MCF 10A (cell line): ENCODE measurements at regions of chr22 and their contacts with region 1.

Region 1: DNA sequence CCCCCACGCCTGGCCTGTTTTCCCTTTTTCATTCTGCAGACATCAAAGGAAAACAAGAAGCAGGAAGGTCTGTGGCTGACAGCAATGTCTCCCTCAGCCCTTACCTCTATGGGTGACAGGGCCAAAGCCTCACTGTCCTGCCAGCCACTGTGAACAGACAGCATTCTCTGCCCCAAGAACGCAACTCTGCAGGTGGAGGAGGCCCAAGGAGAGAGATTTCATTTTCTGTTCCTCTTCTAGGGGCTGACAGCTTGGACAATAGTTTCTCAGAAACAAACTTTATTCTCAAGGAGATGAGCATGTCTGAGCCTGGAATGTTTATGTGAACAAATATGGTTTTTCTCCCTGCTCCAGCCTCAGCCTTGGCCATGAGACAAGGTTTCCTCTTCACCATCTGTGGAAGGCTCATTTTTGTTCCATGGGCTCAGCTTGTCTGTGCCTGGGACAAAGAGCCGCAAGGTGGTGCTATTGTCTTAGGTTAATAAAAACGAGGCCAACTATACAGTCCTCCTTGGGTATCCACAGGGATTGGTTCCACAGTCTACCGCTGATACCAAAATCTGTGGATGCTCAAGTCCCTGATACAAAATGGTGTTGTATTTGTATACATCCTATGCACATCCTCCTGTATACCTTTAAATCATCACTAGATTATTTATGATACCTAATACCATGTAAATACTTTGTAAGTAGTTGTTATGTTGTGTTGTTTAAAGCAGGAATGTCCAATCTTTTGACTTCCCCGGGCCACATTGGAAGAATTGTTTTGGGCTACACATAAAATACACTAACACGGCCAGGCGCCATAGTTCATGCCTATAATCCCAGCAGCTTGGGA is 5.8 kb downstream of the PIWIL3 start:
- DNase-seq: peak; percentile 72
- H3K4me3 Mint-ChIP-seq: no peak overlapping the region
- H3K27ac Mint-ChIP-seq: no peak overlapping the region
- H3K4me1 Mint-ChIP-seq: no peaks in the 10 kb centered on the region
- H3K27me3 Mint-ChIP-seq: peaks cover 28% of the 10 kb centered on the region
- CTCF ChIP-seq: peak; percentile 81

Region 2: DNA sequence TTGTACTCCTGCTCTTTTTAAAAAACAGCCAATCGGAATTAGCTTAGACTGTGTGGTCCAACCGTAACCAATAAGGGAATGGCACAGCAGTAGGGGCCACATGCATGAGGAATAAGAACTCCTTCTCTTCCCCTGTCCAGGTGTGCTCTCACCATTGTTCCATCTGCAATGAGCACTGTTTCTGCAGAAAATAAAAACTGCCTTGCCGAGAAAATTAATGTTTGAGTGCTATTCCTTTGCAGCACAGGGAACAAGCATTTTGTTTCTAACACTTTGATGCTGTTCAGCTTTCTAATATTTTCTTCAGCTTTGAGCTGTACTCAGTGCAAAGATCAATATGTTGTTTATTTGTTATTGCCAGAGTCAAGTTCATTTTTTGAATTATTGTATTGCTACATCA is 52.2 kb before region 1 on chr22:
- CTCF ChIA-PET with region 1: no interaction called
- POLR2A ChIA-PET with region 1: no interaction called
- intact Hi-C with region 1: no loop called
- DNase-seq: no peak
- H3K4me3 Mint-ChIP-seq: no peak overlapping the region
- H3K27ac Mint-ChIP-seq: no peak overlapping the region
- H3K4me1 Mint-ChIP-seq: no peaks in the 10 kb centered on the region
- H3K27me3 Mint-ChIP-seq: peaks cover 90% of the 10 kb centered on the region
- CTCF ChIP-seq: no peak

Region 3: DNA sequence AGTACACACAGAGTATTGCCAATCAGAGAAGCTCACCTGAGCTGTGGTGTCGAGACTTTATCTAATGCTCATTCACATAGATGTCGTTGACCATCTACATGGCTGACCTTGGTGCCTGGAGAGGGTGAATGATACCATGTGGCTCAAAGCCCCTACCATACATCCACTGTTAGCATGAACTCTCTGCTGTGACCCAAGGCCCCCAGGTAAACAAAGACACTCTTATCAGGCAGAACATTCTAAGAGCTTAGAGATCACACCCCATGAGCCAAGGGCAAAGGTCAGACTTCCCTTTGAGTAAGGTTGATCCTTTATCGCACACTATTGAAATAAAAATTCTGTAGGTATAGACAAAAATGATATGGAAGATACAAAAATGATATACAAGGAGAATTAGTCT is 20.8 kb after region 1 on chr22:
- CTCF ChIA-PET with region 1: interaction called, 10 read pairs
- POLR2A ChIA-PET with region 1: interaction called, 3 read pairs
- intact Hi-C with region 1: no loop called
- DNase-seq: no peak
- H3K4me3 Mint-ChIP-seq: no peak overlapping the region
- H3K27ac Mint-ChIP-seq: no peak overlapping the region
- H3K4me1 Mint-ChIP-seq: no peaks in the 10 kb centered on the region
- H3K27me3 Mint-ChIP-seq: peaks cover 50% of the 10 kb centered on the region
- CTCF ChIP-seq: no peak

Region 4: DNA sequence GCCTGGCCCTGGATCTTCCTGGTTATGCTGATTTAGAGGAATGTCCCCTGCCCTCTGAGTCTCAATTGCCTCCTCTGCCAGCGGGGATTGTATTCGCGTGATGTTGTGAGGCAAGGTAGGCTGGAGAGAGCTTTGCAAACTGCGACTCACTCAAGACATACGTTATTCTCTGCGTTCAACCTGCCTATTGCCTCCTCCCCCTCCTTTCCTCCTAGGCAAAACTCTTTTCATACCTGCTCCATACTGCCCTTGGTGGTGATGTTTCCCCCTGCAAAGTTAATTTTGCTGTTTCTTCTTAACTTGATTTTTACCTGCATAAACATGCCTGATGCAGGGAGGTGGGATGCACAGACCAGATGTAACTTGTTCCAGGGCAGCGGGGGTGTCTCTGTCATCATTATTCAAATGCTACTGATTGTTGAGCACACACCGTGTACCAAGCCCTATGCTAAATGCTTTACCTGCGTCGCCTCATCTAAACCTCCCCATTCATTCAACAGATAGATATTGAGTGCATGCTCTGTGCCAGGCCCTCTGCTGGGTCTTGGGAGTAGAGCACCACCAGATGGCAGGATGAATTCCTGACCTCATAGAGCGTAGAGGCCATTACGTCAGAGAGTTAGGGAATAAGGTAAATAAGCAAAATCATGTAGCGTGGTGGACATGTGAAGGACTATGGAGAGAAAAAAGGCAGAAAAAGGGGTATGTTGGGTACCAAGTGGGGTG is 66.3 kb after region 1 on chr22:
- CTCF ChIA-PET with region 1: interaction called, 9 read pairs
- POLR2A ChIA-PET with region 1: no interaction called
- intact Hi-C with region 1: loop called (anchors 5 kb)
- DNase-seq: peak; percentile 39
- H3K4me3 Mint-ChIP-seq: no peak overlapping the region
- H3K27ac Mint-ChIP-seq: no peak overlapping the region
- H3K4me1 Mint-ChIP-seq: no peaks in the 10 kb centered on the region
- H3K27me3 Mint-ChIP-seq: peaks cover 75% of the 10 kb centered on the region
- CTCF ChIP-seq: no peak

Region 5: GRCh38 chr22:24938741-24939341 is 170.1 kb after region 1 on chr22:
- CTCF ChIA-PET with region 1: interaction called, 15 read pairs
- POLR2A ChIA-PET with region 1: no interaction called
- intact Hi-C with region 1: loop called (anchors 2 kb)
- DNase-seq: peak; percentile 73
- H3K4me3 Mint-ChIP-seq: no peak overlapping the region
- H3K27ac Mint-ChIP-seq: no peak overlapping the region
- H3K4me1 Mint-ChIP-seq: peaks cover 6% of the 10 kb centered on the region
- H3K27me3 Mint-ChIP-seq: no peaks in the 10 kb centered on the region
- CTCF ChIP-seq: peak; percentile 82

Region 6: DNA sequence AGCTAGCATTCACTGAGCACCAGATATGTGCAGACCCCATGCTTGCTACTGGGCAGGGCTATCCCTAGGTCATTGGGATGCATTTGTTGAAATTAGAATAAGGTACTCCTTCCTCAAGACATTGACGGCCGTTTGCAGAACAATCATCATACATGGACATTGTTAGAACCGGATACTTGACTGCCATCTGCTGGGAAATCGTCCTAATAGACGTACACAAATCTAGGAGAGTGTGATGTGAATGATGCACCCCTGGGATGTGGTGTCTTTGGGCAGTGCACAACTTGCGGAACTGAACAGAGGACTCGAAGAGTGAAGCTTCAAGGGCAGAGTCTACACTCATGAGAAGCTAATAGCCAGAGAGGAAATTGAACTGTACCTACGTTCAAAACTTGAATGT is 1009.1 kb after region 1 on chr22:
- CTCF ChIA-PET with region 1: interaction called, 3 read pairs
- POLR2A ChIA-PET with region 1: no interaction called
- intact Hi-C with region 1: loop called (anchors 10 kb)
- DNase-seq: peak; percentile 71
- H3K4me3 Mint-ChIP-seq: no peak overlapping the region
- H3K27ac Mint-ChIP-seq: no peak overlapping the region
- H3K4me1 Mint-ChIP-seq: no peaks in the 10 kb centered on the region
- H3K27me3 Mint-ChIP-seq: no peaks in the 10 kb centered on the region
- CTCF ChIP-seq: peak; percentile 31